ENCODE measurements at regions of chr3 and their contacts with region 1.

Region 1: GRCh38 chr3:150286390-150287147 is 121.5 kb upstream of the TSC22D2 start:
- DNase-seq: peak; percentile 47 to 67 (median 60)
- ATAC-seq: peak; percentile 98
- H3K4me3 ChIP-seq: no peak overlapping the region
- H3K27ac ChIP-seq: no peak overlapping the region
- H3K4me1 ChIP-seq: 0 out of 5 replicates have a peak, but pooled peaks cover 0 to 2% of the 10 kb centered on the region in 2 experiments
- H3K27me3 ChIP-seq: no peaks in the 10 kb centered on the region
- CTCF ChIP-seq: peak; percentile 58 to 69 (median 63); a peak in 5 of 6 replicates
- EP300 ChIP-seq: no peak
- POLR2A ChIP-seq: no peak
- RAD21 ChIP-seq: peak; percentile 64 to 74

Region 2: DNA sequence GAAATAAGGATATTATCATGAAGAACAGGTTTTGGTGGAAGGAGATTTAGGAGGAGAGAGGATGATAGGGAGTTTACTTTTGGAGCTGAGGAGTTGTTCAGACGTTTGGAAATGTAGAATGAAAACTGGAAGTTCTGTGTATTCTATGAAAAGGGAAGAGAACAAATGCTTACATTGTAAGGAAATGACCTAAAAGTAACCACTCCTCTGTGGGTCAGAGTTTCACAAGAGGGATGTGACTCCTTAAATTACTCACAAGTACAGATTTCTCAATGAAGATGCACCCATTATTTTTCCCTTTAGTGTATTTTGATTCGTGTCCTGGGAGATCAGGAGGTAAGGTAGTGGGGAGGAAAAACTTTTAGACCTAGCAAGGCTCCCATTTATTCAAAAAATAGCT is 469.6 kb before region 1 on chr3:
- CTCF ChIA-PET with region 1: no interaction called
- POLR2A ChIA-PET with region 1: no interaction called
- in situ Hi-C with region 1: no loop called
- intact Hi-C with region 1: no loop called
- DNase-seq: no peak
- ATAC-seq: no peak
- H3K4me3 ChIP-seq: no peak overlapping the region
- H3K27ac ChIP-seq: no peak overlapping the region
- H3K4me1 ChIP-seq: peaks cover 0 to 8% of the 10 kb centered on the region in 2 experiments; a peak in 3 of 5 replicates
- H3K27me3 ChIP-seq: no peaks in the 10 kb centered on the region
- CTCF ChIP-seq: no peak
- EP300 ChIP-seq: no peak
- POLR2A ChIP-seq: no peak
- RAD21 ChIP-seq: no peak

Region 3: GRCh38 chr3:150132101-150132749 is 154.3 kb before region 1 on chr3:
- CTCF ChIA-PET with region 1: no interaction called
- POLR2A ChIA-PET with region 1: no interaction called
- in situ Hi-C with region 1: no loop called
- intact Hi-C with region 1: no loop called
- DNase-seq: no peak
- ATAC-seq: no peak
- H3K4me3 ChIP-seq: no peak overlapping the region
- H3K27ac ChIP-seq: no peak overlapping the region
- H3K4me1 ChIP-seq: no peaks in the 10 kb centered on the region
- H3K27me3 ChIP-seq: peaks cover 4 to 6% of the 10 kb centered on the region in 2 experiments; a peak in 1 of 5 replicates
- CTCF ChIP-seq: no peak
- EP300 ChIP-seq: no peak
- POLR2A ChIP-seq: no peak
- RAD21 ChIP-seq: no peak

Region 4: GRCh38 chr3:150238998-150239619 is 47.5 kb before region 1 on chr3:
- CTCF ChIA-PET with region 1: no interaction called
- POLR2A ChIA-PET with region 1: no interaction called
- in situ Hi-C with region 1: no loop called
- intact Hi-C with region 1: loop called (anchors 5 kb)
- DNase-seq: peak in 2 of 4 experiments; percentile 22 to 49
- ATAC-seq: peak; percentile 75
- H3K4me3 ChIP-seq: no peak overlapping the region
- H3K27ac ChIP-seq: no peak overlapping the region
- H3K4me1 ChIP-seq: no peaks in the 10 kb centered on the region
- H3K27me3 ChIP-seq: no peaks in the 10 kb centered on the region
- CTCF ChIP-seq: peak; percentile 28 to 67 (median 62); a peak in 3 of 6 replicates
- EP300 ChIP-seq: no peak
- POLR2A ChIP-seq: no peak
- RAD21 ChIP-seq: peak; percentile 61 to 81

Region 5: DNA sequence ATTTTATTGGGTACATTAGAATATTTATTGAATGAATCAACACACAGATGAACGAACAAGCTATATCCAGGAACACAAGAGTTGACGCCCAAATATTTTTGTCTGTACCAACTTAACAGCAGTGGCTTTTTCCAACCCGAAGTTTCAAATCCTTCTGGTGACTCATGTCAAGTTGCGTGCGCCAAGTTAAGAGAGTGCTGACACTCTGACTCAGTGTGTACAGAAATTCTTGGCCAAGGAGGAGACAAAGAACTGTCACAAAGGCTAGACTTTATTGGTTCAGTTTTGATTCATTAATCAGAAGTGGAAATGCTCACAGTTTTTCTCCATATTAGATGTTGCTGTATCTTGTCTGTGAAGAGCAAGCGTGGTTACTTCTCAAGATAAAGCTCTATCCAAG is 61.9 kb after region 1 on chr3:
- CTCF ChIA-PET with region 1: no interaction called
- POLR2A ChIA-PET with region 1: no interaction called
- in situ Hi-C with region 1: no loop called
- intact Hi-C with region 1: no loop called
- DNase-seq: no peak
- ATAC-seq: no peak
- H3K4me3 ChIP-seq: no peak overlapping the region
- H3K27ac ChIP-seq: no peak overlapping the region
- H3K4me1 ChIP-seq: no peaks in the 10 kb centered on the region
- H3K27me3 ChIP-seq: peaks cover 10 to 12% of the 10 kb centered on the region in 2 experiments; a peak in 3 of 5 replicates
- CTCF ChIP-seq: no peak
- EP300 ChIP-seq: no peak
- POLR2A ChIP-seq: no peak
- RAD21 ChIP-seq: no peak